IMR-90 (cell line): ENCODE measurements at regions of chr6 and their contacts with region 1.

Region 1: GRCh38 chr6:116779573-116780164 is 14.2 kb upstream of the FAM162B start:
- DNase-seq: peak; percentile 36
- ATAC-seq: peak; percentile 67; the same call in 1 of the 2 replicates
- H3K4me3 ChIP-seq: no peak overlapping the region
- H3K27ac ChIP-seq: no peak overlapping the region
- H3K4me1 ChIP-seq: no peaks in the 10 kb centered on the region
- H3K27me3 ChIP-seq: no peaks in the 10 kb centered on the region
- CTCF ChIP-seq: peak; percentile 46
- POLR2A ChIP-seq: no peak
- RAD21 ChIP-seq: no peak; the same call in 1 of the 2 replicates

Region 2: GRCh38 chr6:116253505-116254296 is 526.0 kb before region 1 on chr6 and contains the start of gene TSPYL4:
- CTCF ChIA-PET with region 1: no interaction called
- POLR2A ChIA-PET with region 1: no interaction called
- dilution Hi-C with region 1: no loop called
- in situ Hi-C with region 1: no loop called
- intact Hi-C with region 1: no loop called
- DNase-seq: peak; percentile 97
- ATAC-seq: peak; percentile 91
- H3K4me3 ChIP-seq: peak within 1 kb of the TSS; percentile 90
- H3K27ac ChIP-seq: peak within 1 kb of the TSS; percentile 86
- H3K4me1 ChIP-seq: peaks cover 22% of the 10 kb centered on the region
- H3K27me3 ChIP-seq: no peaks in the 10 kb centered on the region
- CTCF ChIP-seq: no peak
- POLR2A ChIP-seq: peak; percentile 88
- RAD21 ChIP-seq: no peak
- total RNA-seq, gene TSPYL4: 22.0 and 23.1 TPM in 2 replicates

Region 3: GRCh38 chr6:116847227-116847626 is 67.6 kb after region 1 on chr6:
- CTCF ChIA-PET with region 1: interaction called, 6 read pairs
- POLR2A ChIA-PET with region 1: no interaction called
- dilution Hi-C with region 1: no loop called
- in situ Hi-C with region 1: no loop called
- intact Hi-C with region 1: loop called (anchors 1 kb)
- DNase-seq: peak; percentile 41
- ATAC-seq: peak; percentile 70
- H3K4me3 ChIP-seq: no peak overlapping the region
- H3K27ac ChIP-seq: no peak overlapping the region
- H3K4me1 ChIP-seq: no peaks in the 10 kb centered on the region
- H3K27me3 ChIP-seq: no peaks in the 10 kb centered on the region
- CTCF ChIP-seq: peak; percentile 49
- POLR2A ChIP-seq: no peak
- RAD21 ChIP-seq: peak; percentile 48